ENCODE measurements at regions of chr19 and their contacts with region 1.

Region 1: GRCh38 chr19:47112997-47113849 is at the start of gene ZC3H4:
- DNase-seq: peak; percentile 99
- ATAC-seq: peak; percentile 76
- H3K4me3 ChIP-seq: peak within 1 kb of the TSS; percentile 85 to 99 (median 98)
- H3K4me3 Mint-ChIP-seq: peak within 1 kb of the TSS; percentile 88
- H3K27ac ChIP-seq: peak within 1 kb of the TSS; percentile 96 to 100
- H3K27ac Mint-ChIP-seq: peak within 1 kb of the TSS; percentile 99
- H3K4me1 ChIP-seq: peaks cover 25 to 30% of the 10 kb centered on the region in 2 donors
- H3K4me1 Mint-ChIP-seq: peaks cover 31% of the 10 kb centered on the region
- H3K27me3 ChIP-seq: no peaks in the 10 kb centered on the region
- H3K27me3 Mint-ChIP-seq: no peaks in the 10 kb centered on the region
- CTCF ChIP-seq: no peak
- total RNA-seq, gene ZC3H4: 66.9 and 73.7 TPM in 2 replicates

Region 2: GRCh38 chr19:46661020-46661731 is 452.0 kb before region 1 on chr19 and contains the start of gene DACT3:
- CTCF ChIA-PET with region 1: no interaction called
- POLR2A ChIA-PET with region 1: no interaction called
- intact Hi-C with region 1: loop called (anchors 2 kb)
- DNase-seq: peak; percentile 100
- ATAC-seq: peak; percentile 88
- H3K4me3 ChIP-seq: peak within 1 kb of the TSS; percentile 26 to 67 (median 52)
- H3K4me3 Mint-ChIP-seq: peak within 1 kb of the TSS; percentile 85
- H3K27ac ChIP-seq: peak within 1 kb of the TSS; percentile 32 to 54
- H3K27ac Mint-ChIP-seq: peak within 1 kb of the TSS; percentile 85
- H3K4me1 ChIP-seq: peaks cover 28 to 31% of the 10 kb centered on the region in 2 donors
- H3K4me1 Mint-ChIP-seq: peaks cover 23% of the 10 kb centered on the region
- H3K27me3 ChIP-seq: peaks cover 0 to 38% (median 22%) of the 10 kb centered on the region in 4 experiments
- H3K27me3 Mint-ChIP-seq: peaks cover 18% of the 10 kb centered on the region
- CTCF ChIP-seq: no peak
- total RNA-seq, gene DACT3: 0.15 and 0.34 TPM in 2 replicates

Region 3: DNA sequence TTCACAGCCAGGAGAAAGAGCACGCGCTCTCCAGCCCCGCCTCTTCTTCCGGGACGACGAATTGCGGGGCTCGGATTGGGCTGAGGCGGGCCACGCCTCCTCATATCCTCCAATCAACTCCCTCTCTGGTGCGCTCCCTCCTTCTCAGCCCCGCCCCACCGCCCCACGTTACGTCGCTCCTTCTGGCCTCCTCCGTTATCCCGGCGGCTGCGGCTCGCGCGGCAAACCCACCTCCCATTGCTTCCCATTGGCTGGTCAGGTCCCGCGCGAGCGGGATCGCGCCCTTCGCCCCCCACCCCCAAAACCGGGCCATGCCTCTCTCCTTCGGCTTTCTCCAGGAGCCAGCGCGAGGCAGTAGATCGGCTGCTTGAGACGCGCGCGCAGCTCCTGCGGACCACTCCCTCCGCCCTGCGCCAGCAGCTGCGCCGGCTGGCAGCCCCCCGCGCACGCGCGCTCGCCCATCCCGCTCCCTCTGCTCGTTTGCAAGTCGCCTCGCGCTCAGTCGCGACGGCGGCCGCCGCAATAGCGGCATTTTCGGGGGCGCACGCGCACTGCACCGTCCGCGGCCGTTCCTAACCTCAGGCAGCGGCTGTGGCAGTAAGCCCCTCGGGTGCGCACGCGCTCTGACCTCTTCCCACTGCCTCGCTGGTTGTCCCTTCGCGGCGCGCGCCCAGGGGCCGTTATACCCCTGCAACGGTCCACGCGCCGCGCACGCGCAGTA is 252.9 kb before region 1 on chr19:
- CTCF ChIA-PET with region 1: no interaction called
- POLR2A ChIA-PET with region 1: interaction called, 4 read pairs
- intact Hi-C with region 1: loop called (anchors 1 kb)
- DNase-seq: peak; percentile 97
- ATAC-seq: peak; percentile 81
- H3K4me3 ChIP-seq: peak overlapping the region in 4 of 5 experiments; percentile 68 to 79 (median 77)
- H3K4me3 Mint-ChIP-seq: peak overlapping the region; percentile 91
- H3K27ac ChIP-seq: peak overlapping the region; percentile 71 to 77
- H3K27ac Mint-ChIP-seq: peak overlapping the region; percentile 95
- H3K4me1 ChIP-seq: peaks cover 40 to 41% of the 10 kb centered on the region in 2 donors
- H3K4me1 Mint-ChIP-seq: peaks cover 22% of the 10 kb centered on the region
- H3K27me3 ChIP-seq: no peaks in the 10 kb centered on the region
- H3K27me3 Mint-ChIP-seq: no peaks in the 10 kb centered on the region
- CTCF ChIP-seq: no peak

Region 4: GRCh38 chr19:47028195-47028601 is 85.0 kb before region 1 on chr19:
- CTCF ChIA-PET with region 1: no interaction called
- POLR2A ChIA-PET with region 1: no interaction called
- intact Hi-C with region 1: no loop called
- DNase-seq: no peak
- ATAC-seq: no peak
- H3K4me3 ChIP-seq: no peak overlapping the region
- H3K4me3 Mint-ChIP-seq: no peak overlapping the region
- H3K27ac ChIP-seq: no peak overlapping the region
- H3K27ac Mint-ChIP-seq: no peak overlapping the region
- H3K4me1 ChIP-seq: peaks cover 4 to 10% of the 10 kb centered on the region in 2 donors
- H3K4me1 Mint-ChIP-seq: peaks cover 5% of the 10 kb centered on the region
- H3K27me3 ChIP-seq: peaks cover 0 to 63% (median 14%) of the 10 kb centered on the region in 4 experiments
- H3K27me3 Mint-ChIP-seq: peaks cover 47% of the 10 kb centered on the region
- CTCF ChIP-seq: no peak

Region 5: DNA sequence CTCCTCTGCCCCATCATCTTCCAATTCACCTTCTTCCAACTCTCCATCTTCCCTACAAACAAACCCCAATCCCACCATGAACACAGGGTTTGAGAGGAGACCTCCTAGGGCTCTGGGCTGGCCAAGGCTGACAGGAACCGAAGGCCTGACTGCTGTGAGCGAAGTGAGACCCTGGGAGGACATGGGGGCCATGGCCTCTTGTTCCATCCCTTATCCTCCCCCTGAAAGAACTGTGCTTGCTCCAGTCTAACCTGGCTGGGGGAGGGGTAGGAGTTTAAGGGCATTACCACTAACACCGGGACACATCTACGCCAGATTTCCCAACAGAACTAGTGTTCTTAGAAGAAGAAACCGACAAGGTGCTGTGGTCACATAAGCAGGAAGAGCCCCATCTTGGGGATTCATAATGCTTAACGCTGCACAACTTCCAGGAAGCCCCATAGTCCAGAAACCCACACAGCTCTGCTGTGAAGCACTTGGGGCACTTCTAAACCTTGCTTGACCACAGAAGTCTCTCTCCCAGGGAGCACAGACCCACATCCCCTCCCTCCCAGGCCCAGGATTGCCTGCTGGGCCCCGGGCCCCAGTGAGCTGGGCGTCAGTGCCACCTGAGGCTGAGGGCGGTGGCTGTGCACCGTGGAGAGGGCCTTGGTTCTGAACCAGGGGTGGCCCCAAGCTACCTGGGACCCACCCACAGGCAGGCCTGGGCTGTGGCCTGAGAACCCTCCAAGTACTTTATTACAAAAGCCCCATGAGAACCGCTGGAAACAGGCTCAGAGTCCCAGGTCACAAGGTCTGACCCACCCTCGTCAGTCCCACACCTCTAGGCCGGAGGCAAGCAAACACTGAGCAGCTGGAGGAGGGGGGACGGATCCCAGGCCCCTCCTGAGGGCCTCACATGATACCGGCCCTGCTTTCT is 18.4 kb before region 1 on chr19:
- CTCF ChIA-PET with region 1: interaction called, 3 read pairs
- POLR2A ChIA-PET with region 1: interaction called, 21 read pairs
- intact Hi-C with region 1: loop called (anchors 2 kb)
- DNase-seq: peak; percentile 29
- ATAC-seq: no peak
- H3K4me3 ChIP-seq: no peak overlapping the region
- H3K4me3 Mint-ChIP-seq: peak overlapping the region; percentile 69
- H3K27ac ChIP-seq: peak overlapping the region; percentile 38 to 60
- H3K27ac Mint-ChIP-seq: peak overlapping the region; percentile 89
- H3K4me1 ChIP-seq: peaks cover 5 to 33% of the 10 kb centered on the region in 2 donors
- H3K4me1 Mint-ChIP-seq: peaks cover 37% of the 10 kb centered on the region
- H3K27me3 ChIP-seq: no peaks in the 10 kb centered on the region
- H3K27me3 Mint-ChIP-seq: no peaks in the 10 kb centered on the region
- CTCF ChIP-seq: no peak

Region 6: DNA sequence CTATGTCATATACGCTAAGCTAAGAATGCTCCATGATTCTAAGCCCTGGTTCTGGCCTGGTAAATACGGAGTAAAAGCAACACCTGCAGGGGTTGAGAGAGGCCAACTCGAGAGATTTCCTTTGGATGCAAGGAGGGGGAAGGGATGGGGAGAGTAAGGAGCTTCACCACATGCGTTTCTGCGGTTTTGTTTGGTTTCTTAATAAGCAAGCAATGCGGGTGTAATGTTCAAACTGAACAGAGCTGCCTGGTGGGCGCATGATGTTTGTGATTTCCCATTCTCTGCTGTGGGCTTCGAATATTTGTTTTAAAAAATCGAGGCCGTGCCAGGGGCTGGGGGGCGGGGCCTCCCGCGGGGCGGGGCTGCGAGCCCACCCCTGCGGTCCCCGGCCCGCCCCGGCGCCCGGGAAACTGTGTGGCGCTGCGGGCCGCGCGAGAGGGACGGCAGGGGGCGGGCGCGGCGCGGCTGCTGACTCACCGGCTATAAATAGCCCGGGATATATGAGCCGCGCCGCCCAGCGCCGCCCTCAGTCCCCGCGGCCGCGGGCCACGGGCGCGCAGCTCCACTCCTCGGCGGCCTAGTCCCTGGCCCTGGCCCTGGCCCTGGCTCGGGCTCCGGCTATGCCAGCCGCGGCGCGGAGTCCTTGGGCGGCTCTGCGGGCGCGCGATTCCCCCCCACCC is 112.7 kb after region 1 on chr19:
- CTCF ChIA-PET with region 1: interaction called, 3 read pairs
- POLR2A ChIA-PET with region 1: interaction called, 30 read pairs
- intact Hi-C with region 1: loop called (anchors 1 kb)
- DNase-seq: peak; percentile 93
- ATAC-seq: peak; percentile 62
- H3K4me3 ChIP-seq: peak overlapping the region in 4 of 5 experiments; percentile 42 to 95 (median 56)
- H3K4me3 Mint-ChIP-seq: peak overlapping the region; percentile 90
- H3K27ac ChIP-seq: peak overlapping the region; percentile 82 to 93
- H3K27ac Mint-ChIP-seq: peak overlapping the region; percentile 95
- H3K4me1 ChIP-seq: peaks cover 41 to 46% of the 10 kb centered on the region in 2 donors
- H3K4me1 Mint-ChIP-seq: peaks cover 15% of the 10 kb centered on the region
- H3K27me3 ChIP-seq: peaks cover 0 to 31% (median 1%) of the 10 kb centered on the region in 4 experiments
- H3K27me3 Mint-ChIP-seq: no peaks in the 10 kb centered on the region
- CTCF ChIP-seq: peak; percentile 50

Region 7: GRCh38 chr19:47514869-47515588 is 401.8 kb after region 1 on chr19 and contains the start of gene NAPA:
- CTCF ChIA-PET with region 1: no interaction called
- POLR2A ChIA-PET with region 1: interaction called, 12 read pairs
- intact Hi-C with region 1: no loop called
- DNase-seq: peak; percentile 100
- ATAC-seq: peak; percentile 93
- H3K4me3 ChIP-seq: peak within 1 kb of the TSS; percentile 72 to 100 (median 83)
- H3K4me3 Mint-ChIP-seq: peak within 1 kb of the TSS; percentile 97
- H3K27ac ChIP-seq: peak within 1 kb of the TSS; percentile 96 to 99
- H3K27ac Mint-ChIP-seq: peak within 1 kb of the TSS; percentile 97
- H3K4me1 ChIP-seq: peaks cover 58 to 66% of the 10 kb centered on the region in 2 donors
- H3K4me1 Mint-ChIP-seq: peaks cover 76% of the 10 kb centered on the region
- H3K27me3 ChIP-seq: peaks cover 0 to 4% (median under 1%) of the 10 kb centered on the region in 4 experiments
- H3K27me3 Mint-ChIP-seq: no peaks in the 10 kb centered on the region
- CTCF ChIP-seq: no peak
- total RNA-seq, gene NAPA: 65.8 and 66.8 TPM in 2 replicates

Measured in B cell (primary cell).